Gastrocnemius medialis (tissue), 4 donors: ENCODE measurements at regions of chr3 and their contacts with region 1.

Region 1: DNA sequence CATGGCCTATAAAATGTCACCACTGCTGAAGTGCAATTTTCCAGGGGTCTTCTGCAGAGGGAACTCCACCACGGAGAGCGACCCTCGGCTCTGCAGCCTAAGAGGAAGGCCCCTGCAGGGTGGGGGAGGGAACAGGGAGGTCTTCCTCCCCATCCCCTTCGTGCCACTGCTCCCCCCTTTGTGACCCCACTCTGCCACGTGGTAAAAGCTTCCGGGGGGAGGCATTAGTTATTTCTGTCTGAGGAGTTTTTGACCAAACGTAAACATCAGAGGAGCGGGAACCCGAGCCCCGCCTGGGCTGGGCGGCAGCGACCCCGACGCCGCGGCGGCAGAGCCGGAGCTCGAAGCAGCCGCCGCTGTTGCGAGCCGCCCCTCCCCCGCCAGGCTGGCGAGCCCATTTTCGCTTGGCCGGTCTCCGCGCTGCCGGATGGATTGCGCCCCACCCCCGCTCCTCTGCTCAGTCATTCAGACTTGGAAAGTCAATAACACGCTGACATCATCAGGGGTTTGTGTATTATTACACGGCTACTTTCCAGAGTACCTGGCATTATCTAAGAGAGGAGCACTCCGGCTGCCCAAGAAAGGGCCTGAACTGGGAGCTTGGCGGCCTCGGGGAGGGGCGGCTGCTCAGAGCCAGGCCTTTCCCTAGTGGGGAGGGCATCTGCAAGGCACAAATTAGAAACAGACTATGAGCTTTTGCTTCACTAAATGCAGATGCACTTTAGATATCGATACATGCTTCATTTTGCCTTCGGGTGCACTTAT is 162.5 kb upstream of the TBL1XR1 start:
- DNase-seq: peak; percentile 91 to 94
- ATAC-seq: peak; percentile 87 to 90
- H3K4me3 ChIP-seq: peak overlapping the region; percentile 47 to 57 (median 52)
- H3K27ac ChIP-seq: peak overlapping the region; percentile 84 to 92 (median 88)
- H3K4me1 ChIP-seq: peaks cover 47 to 53% of the 10 kb centered on the region in 2 donors
- H3K27me3 ChIP-seq: no peaks in the 10 kb centered on the region
- CTCF ChIP-seq: peak in 2 of 5 experiments; percentile 24 to 43
- POLR2A ChIP-seq: peak; percentile 43 to 83

Region 2: DNA sequence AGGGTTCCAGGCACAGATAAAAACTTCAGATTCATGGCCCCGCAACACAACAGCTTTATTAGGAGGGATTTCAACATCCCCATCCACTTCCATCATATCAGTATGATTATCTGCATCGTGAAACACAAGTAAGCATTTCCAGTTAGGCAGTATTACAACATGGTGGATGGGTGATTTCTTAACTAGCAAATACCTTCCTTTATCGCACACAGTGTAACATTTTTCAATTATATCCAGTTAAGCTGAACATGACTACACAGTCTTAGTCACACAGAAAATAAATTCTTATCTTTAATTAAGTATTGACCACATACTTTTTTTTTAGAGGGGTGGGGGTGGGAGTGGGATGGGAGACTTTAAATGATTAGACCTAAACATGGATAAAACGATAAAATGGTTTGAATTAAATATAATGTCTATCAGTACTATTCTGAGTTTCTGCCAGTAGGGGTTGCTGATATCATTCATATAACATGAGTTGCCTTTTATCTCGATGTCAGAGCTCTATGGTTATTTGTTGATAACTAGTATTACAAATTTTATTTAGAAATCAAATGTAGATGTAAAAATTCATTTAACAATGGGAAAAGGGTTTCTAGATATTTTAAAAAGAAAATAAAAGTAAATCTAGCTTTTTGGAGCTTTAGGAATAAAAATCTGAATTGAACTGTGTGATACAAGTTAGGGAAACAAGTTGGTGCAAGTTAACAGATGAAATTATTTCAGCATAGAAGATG is 309.1 kb before region 1 on chr3:
- in situ Hi-C with region 1: loop called (anchors 10 to 25 kb)
- intact Hi-C with region 1: loop called (anchors 5 kb)
- DNase-seq: no peak
- ATAC-seq: peak in 1 of 2 donors; percentile 84
- H3K4me3 ChIP-seq: no peak overlapping the region
- H3K27ac ChIP-seq: peak overlapping the region in 1 of 4 donors; percentile 3
- H3K4me1 ChIP-seq: peaks cover 6 to 11% of the 10 kb centered on the region in 2 donors
- H3K27me3 ChIP-seq: no peaks in the 10 kb centered on the region
- CTCF ChIP-seq: peak; percentile 50 to 71 (median 57)
- POLR2A ChIP-seq: no peak

Region 3: GRCh38 chr3:177197041-177197727 is 162.6 kb before region 1 on chr3 and contains the start of gene TBL1XR1:
- in situ Hi-C with region 1: loop called (anchors 5 to 10 kb)
- intact Hi-C with region 1: loop called (anchors 1 kb)
- DNase-seq: peak; percentile 91 to 96
- ATAC-seq: peak; percentile 90 to 92
- H3K4me3 ChIP-seq: peak within 1 kb of the TSS; percentile 72 to 92 (median 84)
- H3K27ac ChIP-seq: peak within 1 kb of the TSS; percentile 94 to 98 (median 96)
- H3K4me1 ChIP-seq: peaks cover 17 to 20% of the 10 kb centered on the region in 2 donors
- H3K27me3 ChIP-seq: no peaks in the 10 kb centered on the region
- CTCF ChIP-seq: no peak
- POLR2A ChIP-seq: peak in 1 of 2 donors; percentile 30
- total RNA-seq, gene TBL1XR1: 35.9 to 77.8 (median 49.2) TPM

Region 4: GRCh38 chr3:177345049-177345972 is 14.5 kb before region 1 on chr3:
- in situ Hi-C with region 1: no loop called
- intact Hi-C with region 1: loop called (anchors 1 kb)
- DNase-seq: peak; percentile 90 to 95
- ATAC-seq: peak; percentile 97
- H3K4me3 ChIP-seq: peak overlapping the region; percentile 13 to 45 (median 35)
- H3K27ac ChIP-seq: peak overlapping the region; percentile 88 to 94 (median 94)
- H3K4me1 ChIP-seq: peaks cover 22 to 27% of the 10 kb centered on the region in 2 donors
- H3K27me3 ChIP-seq: no peaks in the 10 kb centered on the region
- CTCF ChIP-seq: no peak
- POLR2A ChIP-seq: no peak

Region 5: GRCh38 chr3:177610677-177611633 is 251.2 kb after region 1 on chr3:
- in situ Hi-C with region 1: no loop called
- intact Hi-C with region 1: loop called (anchors 5 kb)
- DNase-seq: no peak
- ATAC-seq: no peak
- H3K4me3 ChIP-seq: no peak overlapping the region
- H3K27ac ChIP-seq: no peak overlapping the region
- H3K4me1 ChIP-seq: peaks cover 9 to 20% of the 10 kb centered on the region in 2 donors
- H3K27me3 ChIP-seq: no peaks in the 10 kb centered on the region
- CTCF ChIP-seq: no peak
- POLR2A ChIP-seq: no peak

Region 6: GRCh38 chr3:177777699-177778098 is 417.9 kb after region 1 on chr3:
- in situ Hi-C with region 1: no loop called
- intact Hi-C with region 1: loop called (anchors 5 kb)
- DNase-seq: peak; percentile 20 to 62
- ATAC-seq: peak; percentile 73 to 75
- H3K4me3 ChIP-seq: no peak overlapping the region
- H3K27ac ChIP-seq: no peak overlapping the region
- H3K4me1 ChIP-seq: peaks cover 26 to 31% of the 10 kb centered on the region in 2 donors
- H3K27me3 ChIP-seq: no peaks in the 10 kb centered on the region
- CTCF ChIP-seq: peak; percentile 62 to 83 (median 72)
- POLR2A ChIP-seq: no peak

Region 7: DNA sequence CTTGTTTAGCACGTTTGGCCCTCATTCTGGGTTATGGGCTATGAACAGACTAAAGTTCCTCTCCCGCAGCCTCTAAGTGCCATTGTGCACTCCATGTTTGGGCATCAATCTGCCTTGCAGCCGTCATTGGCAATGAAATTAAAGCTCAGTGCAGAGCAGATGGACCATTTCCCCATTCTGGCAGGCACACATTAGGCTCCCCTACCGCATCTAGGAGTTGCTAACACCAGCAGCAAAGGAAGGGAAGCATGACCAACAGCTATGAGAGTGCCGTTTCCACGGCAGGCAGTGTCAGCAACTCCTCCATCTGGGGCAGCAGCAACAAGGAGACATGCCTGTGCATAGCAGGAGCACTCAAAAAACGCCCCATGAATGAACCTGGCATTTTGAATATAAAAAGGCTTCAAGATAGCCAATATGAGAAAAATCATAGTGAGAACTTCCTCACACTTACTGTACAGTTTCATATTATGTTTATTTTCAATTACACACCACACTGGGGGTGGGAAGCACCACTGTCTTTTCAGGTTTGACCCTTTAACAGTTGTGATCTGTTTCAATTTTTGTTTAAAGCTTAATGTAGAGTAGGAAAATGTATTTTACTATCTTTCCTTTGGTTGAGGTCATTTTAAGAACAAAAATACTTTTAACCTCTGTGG is 1395.2 kb after region 1 on chr3:
- in situ Hi-C with region 1: no loop called
- intact Hi-C with region 1: no loop called
- DNase-seq: no peak
- ATAC-seq: no peak
- H3K4me3 ChIP-seq: no peak overlapping the region
- H3K27ac ChIP-seq: no peak overlapping the region
- H3K4me1 ChIP-seq: no peaks in the 10 kb centered on the region
- H3K27me3 ChIP-seq: no peaks in the 10 kb centered on the region
- CTCF ChIP-seq: no peak
- POLR2A ChIP-seq: no peak